Activated B cell treated with CpG ODN at 0.5 μM for 24 hours (primary cell): ENCODE measurements at regions of chr2 and their contacts with region 1.

Region 1: DNA sequence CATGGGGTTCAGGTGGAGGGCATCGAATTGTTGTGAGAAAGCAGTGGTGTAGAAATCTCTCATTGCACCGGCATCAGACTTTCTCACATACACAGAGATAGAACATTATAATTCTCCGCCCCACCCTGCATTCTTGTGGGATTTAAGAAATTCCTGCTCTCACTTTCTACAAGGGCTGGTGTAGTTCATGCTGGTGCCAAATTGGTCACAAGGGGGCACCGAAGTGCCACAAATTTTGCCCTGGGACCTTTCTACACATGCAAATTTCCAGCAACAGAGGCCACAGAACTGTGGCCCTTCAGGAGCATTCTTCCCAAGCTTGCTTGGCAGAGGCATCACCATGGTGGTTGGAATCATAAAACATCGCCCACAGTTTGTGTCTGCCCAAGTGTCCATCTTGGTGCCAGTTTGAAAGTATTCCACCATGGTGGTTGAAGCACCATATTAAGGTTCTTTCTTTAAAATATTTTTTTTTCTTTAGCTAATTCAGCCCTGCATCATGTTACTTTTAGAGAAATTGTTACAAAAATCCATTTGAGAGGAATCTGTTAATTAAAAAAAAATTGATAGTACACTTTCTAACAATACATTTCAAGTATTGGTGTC is 521.2 kb upstream of the FANCL start:
- DNase-seq: peak; percentile 37
- ATAC-seq: peak; percentile 75
- H3K4me3 Mint-ChIP-seq: no peak overlapping the region
- H3K27ac Mint-ChIP-seq: no peak overlapping the region
- H3K4me1 Mint-ChIP-seq: peaks cover 6% of the 10 kb centered on the region
- H3K27me3 Mint-ChIP-seq: no peaks in the 10 kb centered on the region
- CTCF ChIP-seq: peak; percentile 60

Region 2: GRCh38 chr2:57720728-57721627 is 1041.3 kb before region 1 on chr2:
- CTCF ChIA-PET with region 1: no interaction called
- POLR2A ChIA-PET with region 1: no interaction called
- intact Hi-C with region 1: loop called (anchors 5 kb)
- DNase-seq: peak; percentile 16
- ATAC-seq: peak; percentile 86
- H3K4me3 Mint-ChIP-seq: peak overlapping the region; percentile 44
- H3K27ac Mint-ChIP-seq: no peak overlapping the region
- H3K4me1 Mint-ChIP-seq: peaks cover 5% of the 10 kb centered on the region
- H3K27me3 Mint-ChIP-seq: no peaks in the 10 kb centered on the region
- CTCF ChIP-seq: peak; percentile 53

Region 3: GRCh38 chr2:58521803-58522554 is 240.3 kb before region 1 on chr2:
- CTCF ChIA-PET with region 1: no interaction called
- POLR2A ChIA-PET with region 1: no interaction called
- intact Hi-C with region 1: no loop called
- DNase-seq: no peak
- ATAC-seq: no peak
- H3K4me3 Mint-ChIP-seq: no peak overlapping the region
- H3K27ac Mint-ChIP-seq: no peak overlapping the region
- H3K4me1 Mint-ChIP-seq: no peaks in the 10 kb centered on the region
- H3K27me3 Mint-ChIP-seq: peaks cover 2% of the 10 kb centered on the region
- CTCF ChIP-seq: no peak

Region 4: DNA sequence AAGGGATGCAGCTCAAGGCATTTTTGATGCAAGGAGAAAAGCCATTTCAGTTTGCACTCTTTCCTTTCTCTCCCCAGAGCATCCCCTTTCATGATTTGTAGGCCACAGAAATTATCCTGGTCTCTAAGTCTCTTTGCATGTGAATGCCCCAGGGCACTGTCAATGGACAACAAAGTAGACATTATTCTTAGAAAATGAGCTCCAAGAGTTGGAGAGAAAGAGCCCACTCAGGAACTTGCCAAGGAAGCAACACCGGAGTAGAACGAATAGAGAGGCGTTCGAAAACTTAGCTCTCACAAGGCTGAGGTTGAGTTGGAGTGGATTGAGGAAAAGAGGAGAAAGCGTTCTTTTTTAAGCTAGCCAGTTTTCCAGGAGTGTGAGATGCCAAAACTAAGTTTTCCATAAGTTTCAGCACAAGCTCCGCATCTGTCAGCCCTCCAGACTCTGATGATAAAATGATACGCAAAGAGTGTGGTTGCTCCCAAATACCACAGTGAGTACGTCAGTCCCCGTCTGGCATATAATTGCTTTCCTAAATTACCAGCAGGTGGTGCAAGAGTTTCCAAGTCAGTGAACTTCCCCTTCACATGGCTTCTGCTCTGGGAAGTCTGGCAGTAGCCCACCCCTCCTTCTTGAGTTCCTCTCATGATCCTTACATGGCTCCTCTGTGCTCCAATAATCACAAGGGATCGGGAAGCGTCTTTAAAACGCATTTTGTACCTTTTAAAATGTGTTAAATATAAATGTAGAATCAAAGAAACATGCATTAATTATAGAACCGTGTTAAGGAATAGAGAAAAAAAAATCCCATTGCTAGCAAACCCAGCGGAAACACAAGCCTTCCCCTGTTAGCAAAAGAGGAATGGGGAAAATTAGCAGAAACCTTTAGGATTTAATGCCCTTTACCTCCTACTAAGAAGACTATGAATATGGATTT is 539.5 kb after region 1 on chr2:
- CTCF ChIA-PET with region 1: no interaction called
- POLR2A ChIA-PET with region 1: no interaction called
- intact Hi-C with region 1: loop called (anchors 5 kb)
- DNase-seq: no peak
- ATAC-seq: peak; percentile 67
- H3K4me3 Mint-ChIP-seq: no peak overlapping the region
- H3K27ac Mint-ChIP-seq: no peak overlapping the region
- H3K4me1 Mint-ChIP-seq: no peaks in the 10 kb centered on the region
- H3K27me3 Mint-ChIP-seq: peaks cover 2% of the 10 kb centered on the region
- CTCF ChIP-seq: no peak

Region 5: DNA sequence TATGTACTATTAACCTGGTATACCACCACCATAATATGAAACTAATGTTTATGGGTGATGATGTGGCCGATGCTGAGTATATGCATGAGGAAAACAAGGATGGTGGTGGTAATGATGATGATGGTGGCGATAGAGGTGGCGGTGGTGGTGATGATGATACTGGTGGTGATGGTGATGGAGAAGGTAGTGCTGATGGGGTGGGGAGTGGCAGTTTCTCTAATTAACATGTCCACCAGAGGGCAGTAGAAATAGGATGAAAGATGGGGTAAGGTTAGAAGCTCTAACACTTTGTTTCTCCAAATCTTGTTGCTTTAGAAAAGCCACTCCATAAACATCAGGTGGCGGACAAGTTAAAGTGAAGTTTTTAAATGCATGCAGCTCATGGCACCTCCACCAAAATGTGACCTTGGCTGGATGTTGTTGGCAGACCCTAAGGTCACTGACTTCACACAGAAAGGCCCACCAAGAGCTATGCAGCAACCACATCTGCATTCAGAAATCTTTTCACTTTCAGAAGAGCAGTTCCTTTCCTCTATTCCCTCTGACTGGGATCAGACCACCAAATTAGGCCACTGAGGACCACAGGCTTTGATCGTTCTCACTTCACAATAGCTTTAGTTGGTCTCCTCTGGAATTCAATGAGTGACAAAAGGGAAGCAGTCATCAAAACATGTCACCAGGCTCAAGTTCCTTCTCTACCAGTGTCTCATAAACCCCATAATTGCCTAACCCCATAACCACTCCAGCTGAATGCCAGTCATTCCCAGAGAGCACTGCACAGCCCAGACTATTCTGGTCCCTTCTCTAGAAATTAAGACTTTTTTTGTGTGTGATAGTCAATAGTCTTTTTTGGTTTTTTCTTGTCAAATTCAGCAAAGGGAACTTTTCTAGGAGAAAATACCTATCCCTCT is 1798.7 kb after region 1 on chr2:
- CTCF ChIA-PET with region 1: interaction called, 14 read pairs
- POLR2A ChIA-PET with region 1: no interaction called
- intact Hi-C with region 1: loop called (anchors 1 kb)
- DNase-seq: no peak
- ATAC-seq: peak; percentile 44
- H3K4me3 Mint-ChIP-seq: no peak overlapping the region
- H3K27ac Mint-ChIP-seq: no peak overlapping the region
- H3K4me1 Mint-ChIP-seq: peaks cover 46% of the 10 kb centered on the region
- H3K27me3 Mint-ChIP-seq: no peaks in the 10 kb centered on the region
- CTCF ChIP-seq: peak; percentile 20

Region 6: GRCh38 chr2:60641811-60642788 is 1879.8 kb after region 1 on chr2:
- CTCF ChIA-PET with region 1: interaction called, 4 read pairs
- POLR2A ChIA-PET with region 1: no interaction called
- intact Hi-C with region 1: loop called (anchors 1 kb)
- DNase-seq: no peak
- ATAC-seq: peak; percentile 56
- H3K4me3 Mint-ChIP-seq: no peak overlapping the region
- H3K27ac Mint-ChIP-seq: no peak overlapping the region
- H3K4me1 Mint-ChIP-seq: peaks cover 23% of the 10 kb centered on the region
- H3K27me3 Mint-ChIP-seq: peaks cover 3% of the 10 kb centered on the region
- CTCF ChIP-seq: peak; percentile 34